IMR-90 (cell line): ENCODE measurements at regions of chr19 and their contacts with region 1.

Region 1: DNA sequence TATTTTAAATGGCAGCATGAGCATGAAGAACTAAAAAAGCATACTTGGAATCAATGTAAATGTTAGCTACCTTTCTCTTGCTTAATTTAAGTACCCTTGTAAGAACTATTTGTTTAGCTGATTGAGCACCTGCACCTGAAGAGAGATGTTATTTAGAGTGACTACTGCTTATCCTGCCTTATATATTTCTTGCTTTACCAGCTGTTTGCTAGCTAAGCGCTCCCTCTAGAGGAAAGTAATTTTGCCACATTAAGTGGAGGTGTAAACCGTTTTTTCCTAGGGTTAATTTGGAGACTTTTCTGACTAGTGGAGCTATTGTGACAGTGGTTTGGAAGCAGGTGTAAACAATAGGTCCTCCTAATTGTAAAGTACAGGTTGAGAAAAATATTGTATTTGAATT is 19.4 kb upstream of the PSG2 start:
- DNase-seq: no peak
- ATAC-seq: no peak
- H3K4me3 ChIP-seq: no peak overlapping the region
- H3K27ac ChIP-seq: no peak overlapping the region
- H3K4me1 ChIP-seq: peaks cover 5% of the 10 kb centered on the region
- H3K27me3 ChIP-seq: no peaks in the 10 kb centered on the region
- CTCF ChIP-seq: peak; percentile 23; the same call in 1 of the 2 replicates
- POLR2A ChIP-seq: no peak
- RAD21 ChIP-seq: peak; percentile 30; the same call in 1 of the 2 replicates

Region 2: GRCh38 chr19:43207991-43208390 is 106.0 kb after region 1 on chr19:
- CTCF ChIA-PET with region 1: no interaction called
- POLR2A ChIA-PET with region 1: no interaction called
- dilution Hi-C with region 1: no loop called
- in situ Hi-C with region 1: no loop called
- intact Hi-C with region 1: loop called (anchors 5 kb)
- DNase-seq: no peak
- ATAC-seq: no peak
- H3K4me3 ChIP-seq: no peak overlapping the region
- H3K27ac ChIP-seq: no peak overlapping the region
- H3K4me1 ChIP-seq: peaks cover 7% of the 10 kb centered on the region
- H3K27me3 ChIP-seq: no peaks in the 10 kb centered on the region
- CTCF ChIP-seq: no peak
- POLR2A ChIP-seq: no peak
- RAD21 ChIP-seq: no peak

Region 3: GRCh38 chr19:43425567-43426392 is 323.8 kb after region 1 on chr19:
- CTCF ChIA-PET with region 1: interaction called, 3 read pairs
- POLR2A ChIA-PET with region 1: no interaction called
- dilution Hi-C with region 1: no loop called
- in situ Hi-C with region 1: loop called (anchors 10 kb)
- intact Hi-C with region 1: loop called (anchors 2 kb)
- DNase-seq: peak; percentile 18
- ATAC-seq: peak; percentile 79
- H3K4me3 ChIP-seq: no peak overlapping the region
- H3K27ac ChIP-seq: no peak overlapping the region
- H3K4me1 ChIP-seq: no peaks in the 10 kb centered on the region
- H3K27me3 ChIP-seq: peaks cover 5% of the 10 kb centered on the region
- CTCF ChIP-seq: peak; percentile 51
- POLR2A ChIP-seq: no peak
- RAD21 ChIP-seq: peak; percentile 42

Region 4: DNA sequence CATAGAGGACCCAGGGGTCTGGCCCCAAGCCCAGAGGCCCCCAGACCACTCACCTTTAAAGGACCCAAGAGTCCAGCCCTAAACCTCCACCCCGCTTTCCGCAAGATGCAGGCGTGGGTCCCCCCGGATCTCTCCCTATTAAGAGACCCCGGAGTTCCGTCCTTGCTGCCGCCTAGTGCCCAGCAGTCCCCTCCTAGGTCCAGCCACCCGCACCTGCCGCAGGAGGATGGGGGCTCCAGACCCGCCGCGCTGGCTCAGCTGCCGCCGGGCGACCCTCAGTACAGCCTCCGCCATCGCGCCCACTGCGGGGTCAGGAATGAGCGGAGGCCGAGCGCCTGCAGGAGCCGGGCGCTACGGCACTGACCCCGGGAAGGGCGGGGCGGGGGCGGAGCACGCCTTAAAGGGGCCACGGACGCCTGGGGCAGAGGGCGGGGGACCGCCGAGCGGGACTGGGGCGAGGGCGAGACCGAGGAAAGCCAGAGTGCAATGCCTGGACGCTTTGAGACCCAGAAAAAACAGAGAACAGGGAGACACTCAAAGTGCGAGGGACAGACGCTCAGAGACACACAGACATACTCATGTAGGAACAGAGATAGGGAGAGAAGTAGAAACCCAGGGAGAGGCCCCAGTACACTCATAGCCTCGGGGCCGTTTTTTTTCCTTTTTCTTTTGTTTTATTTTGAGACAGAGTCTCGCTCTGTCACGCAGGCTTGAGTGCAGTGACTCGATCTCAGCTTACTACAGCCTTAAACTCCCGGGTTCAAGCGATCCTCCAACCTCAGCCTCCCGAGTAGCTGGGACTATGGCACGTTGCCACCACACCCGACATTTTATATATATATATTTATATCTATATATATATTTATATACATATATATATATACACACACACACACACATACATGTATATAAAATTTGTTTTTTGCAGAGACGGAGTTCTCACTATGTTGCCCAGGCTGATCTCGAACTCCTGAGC is 425.2 kb after region 1 on chr19 and contains the start of gene ETHE1:
- CTCF ChIA-PET with region 1: no interaction called
- POLR2A ChIA-PET with region 1: no interaction called
- dilution Hi-C with region 1: no loop called
- in situ Hi-C with region 1: loop called (anchors 10 kb)
- intact Hi-C with region 1: no loop called
- DNase-seq: peak; percentile 31
- ATAC-seq: peak; percentile 90
- H3K4me3 ChIP-seq: peak within 1 kb of the TSS; percentile 96
- H3K27ac ChIP-seq: peak within 1 kb of the TSS; percentile 78
- H3K4me1 ChIP-seq: peaks cover 4% of the 10 kb centered on the region
- H3K27me3 ChIP-seq: no peaks in the 10 kb centered on the region
- CTCF ChIP-seq: no peak
- POLR2A ChIP-seq: peak; percentile 60
- RAD21 ChIP-seq: no peak
- total RNA-seq, gene ETHE1: 141 and 161 TPM in 2 replicates

Region 5: DNA sequence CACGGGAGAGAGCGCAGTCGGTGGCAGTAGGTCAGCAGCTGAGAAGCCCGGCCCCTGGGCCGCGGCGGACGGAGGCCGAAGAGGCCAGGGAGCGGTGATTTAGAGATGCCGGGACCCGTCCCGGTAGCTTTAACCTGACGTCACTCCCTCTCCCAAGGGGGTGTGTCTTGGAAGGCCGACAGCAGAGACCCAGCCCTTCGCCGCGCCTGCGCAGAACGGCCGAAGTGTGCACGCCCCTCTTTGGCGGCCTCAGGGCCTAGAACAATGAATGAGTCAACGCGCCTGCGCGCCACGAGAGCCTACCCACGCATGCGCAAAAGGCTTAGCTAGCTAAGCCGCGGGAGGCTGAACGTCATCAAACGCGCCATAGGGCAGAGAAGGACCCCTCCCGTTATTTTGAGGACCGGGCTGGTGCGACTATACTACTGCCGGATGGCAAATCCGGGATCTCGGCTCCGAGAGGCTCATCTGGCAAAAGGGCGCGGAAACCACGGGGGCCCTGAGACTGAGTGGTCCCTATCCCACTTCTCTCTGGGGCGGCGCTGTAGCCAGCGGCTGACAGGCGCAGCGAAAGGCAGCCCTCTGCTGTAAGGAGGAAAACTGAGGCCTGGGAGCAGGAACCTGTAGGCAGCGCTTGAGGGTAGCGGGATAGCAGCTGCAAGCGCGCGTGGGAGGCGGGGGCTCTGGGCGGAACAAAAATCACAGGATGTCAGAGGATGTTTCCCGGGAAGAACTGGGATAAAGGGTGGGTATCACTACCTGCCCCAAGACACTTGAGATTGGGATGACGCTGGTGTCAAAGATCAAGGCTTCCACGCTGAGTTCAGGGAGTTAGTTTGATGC is 494.3 kb after region 1 on chr19 and contains the starts of genes IRGQ and ZNF576:
- CTCF ChIA-PET with region 1: no interaction called
- POLR2A ChIA-PET with region 1: no interaction called
- dilution Hi-C with region 1: no loop called
- in situ Hi-C with region 1: no loop called
- intact Hi-C with region 1: no loop called
- DNase-seq: peak; percentile 99
- ATAC-seq: peak; percentile 82
- H3K4me3 ChIP-seq: peak within 1 kb of the TSS; percentile 68
- H3K27ac ChIP-seq: peak within 1 kb of the TSS; percentile 79
- H3K4me1 ChIP-seq: peaks cover 9% of the 10 kb centered on the region
- H3K27me3 ChIP-seq: no peaks in the 10 kb centered on the region
- CTCF ChIP-seq: 0 out of 2 replicates have a peak, but pooled peaks have one; percentile 3
- POLR2A ChIP-seq: peak; percentile 78
- RAD21 ChIP-seq: peak; percentile 18; the same call in 1 of the 2 replicates
- total RNA-seq, gene IRGQ: 9.0 and 10.8 TPM in 2 replicates
- total RNA-seq, gene ZNF576: 8.6 and 13.8 TPM in 2 replicates